Posterior vena cava (tissue), 2 donors: ENCODE measurements at regions of chr15 and their contacts with region 1.

Region 1: DNA sequence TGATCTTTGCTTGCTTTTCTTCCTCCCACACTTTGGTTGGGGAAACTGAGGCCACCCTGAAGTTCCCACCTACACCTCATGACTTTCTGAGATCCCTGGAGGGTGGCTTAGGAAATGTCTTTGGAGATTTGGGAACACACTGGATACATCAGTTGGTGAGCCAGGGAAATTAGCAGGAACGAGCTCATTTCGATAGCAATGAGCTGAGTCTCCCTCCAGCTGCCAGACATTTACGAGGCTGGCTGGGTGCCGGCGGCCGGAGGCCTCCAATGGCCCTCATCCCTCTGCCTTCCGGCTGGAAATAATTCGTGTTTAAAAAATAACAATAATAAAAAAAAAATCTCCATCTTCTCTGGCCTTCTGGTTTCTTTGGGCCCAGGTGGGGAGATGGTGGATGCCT is 38.8 kb downstream of the SMAD6 start:
- DNase-seq: peak; percentile 94

Region 2: DNA sequence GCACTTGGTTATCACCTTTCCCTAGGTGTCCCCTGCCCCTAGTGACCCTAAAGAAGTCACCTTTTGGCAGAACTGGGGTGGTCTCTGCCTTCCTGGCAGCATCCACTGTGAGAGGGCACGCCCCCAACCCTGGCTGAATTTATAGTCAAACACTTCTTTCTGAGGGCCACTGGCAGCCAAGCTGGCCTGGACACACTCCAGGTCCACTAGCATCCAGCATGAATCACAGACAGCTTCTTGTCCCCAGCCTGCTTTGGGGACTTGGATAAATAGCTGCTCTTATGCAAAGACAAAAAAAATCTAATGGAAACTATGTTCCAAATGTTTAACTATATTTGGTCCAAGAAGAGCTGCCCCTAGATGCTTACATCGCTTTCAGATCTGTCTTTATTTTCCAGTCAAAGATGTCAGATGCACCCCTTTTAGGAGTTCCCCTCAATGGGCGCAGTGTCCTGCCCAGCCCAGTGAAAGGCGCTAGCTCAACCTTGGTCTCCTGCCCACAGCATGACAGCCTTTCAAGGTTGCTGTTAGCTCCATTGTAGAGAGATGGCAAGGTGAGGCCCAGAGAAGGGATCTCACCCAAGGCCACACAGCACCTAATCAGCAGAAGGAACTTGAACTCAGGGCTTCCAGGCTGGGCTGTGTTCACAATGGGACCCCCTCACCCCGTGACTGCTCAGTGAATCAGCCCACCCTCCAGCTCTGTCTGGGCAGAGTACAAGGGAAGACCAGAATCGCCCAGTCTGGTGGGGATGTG is 1680.0 kb before region 1 on chr15:
- intact Hi-C with region 1: loop called in 1 of 2 experiments (anchors 5 kb)
- DNase-seq: peak; percentile 87

Region 3: DNA sequence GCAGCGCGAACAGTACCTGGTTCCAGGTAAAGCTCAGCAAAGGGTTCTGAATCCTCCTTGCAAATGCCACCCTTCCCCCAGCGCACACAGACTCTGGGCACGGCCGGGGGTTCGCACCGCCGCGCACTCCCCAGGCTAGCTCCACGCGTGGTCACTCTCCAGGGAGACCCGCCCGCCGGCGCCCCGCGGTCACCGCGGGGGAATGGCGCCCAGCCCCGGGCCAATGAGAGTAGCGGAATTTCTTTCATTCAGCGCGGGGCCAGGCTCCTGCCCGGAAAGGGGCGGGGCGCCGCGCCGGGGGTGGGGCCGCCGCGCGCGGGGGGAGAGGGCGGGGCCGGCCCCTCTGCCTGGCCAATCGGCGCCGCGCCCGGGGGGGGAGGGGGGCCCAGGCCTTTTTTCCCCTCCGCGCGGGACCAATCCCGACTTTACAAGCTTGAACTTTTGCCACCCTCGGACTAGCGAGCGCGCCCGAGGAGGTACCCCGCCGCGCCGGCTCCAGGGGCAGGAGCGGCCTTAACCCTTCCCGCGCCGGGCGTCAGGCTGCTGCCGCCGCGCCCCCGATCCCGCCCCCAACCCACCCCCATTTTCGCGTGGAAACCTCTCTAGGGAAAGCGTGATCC is 39.9 kb before region 1 on chr15:
- intact Hi-C with region 1: no loop called
- DNase-seq: peak; percentile 98

Region 4: DNA sequence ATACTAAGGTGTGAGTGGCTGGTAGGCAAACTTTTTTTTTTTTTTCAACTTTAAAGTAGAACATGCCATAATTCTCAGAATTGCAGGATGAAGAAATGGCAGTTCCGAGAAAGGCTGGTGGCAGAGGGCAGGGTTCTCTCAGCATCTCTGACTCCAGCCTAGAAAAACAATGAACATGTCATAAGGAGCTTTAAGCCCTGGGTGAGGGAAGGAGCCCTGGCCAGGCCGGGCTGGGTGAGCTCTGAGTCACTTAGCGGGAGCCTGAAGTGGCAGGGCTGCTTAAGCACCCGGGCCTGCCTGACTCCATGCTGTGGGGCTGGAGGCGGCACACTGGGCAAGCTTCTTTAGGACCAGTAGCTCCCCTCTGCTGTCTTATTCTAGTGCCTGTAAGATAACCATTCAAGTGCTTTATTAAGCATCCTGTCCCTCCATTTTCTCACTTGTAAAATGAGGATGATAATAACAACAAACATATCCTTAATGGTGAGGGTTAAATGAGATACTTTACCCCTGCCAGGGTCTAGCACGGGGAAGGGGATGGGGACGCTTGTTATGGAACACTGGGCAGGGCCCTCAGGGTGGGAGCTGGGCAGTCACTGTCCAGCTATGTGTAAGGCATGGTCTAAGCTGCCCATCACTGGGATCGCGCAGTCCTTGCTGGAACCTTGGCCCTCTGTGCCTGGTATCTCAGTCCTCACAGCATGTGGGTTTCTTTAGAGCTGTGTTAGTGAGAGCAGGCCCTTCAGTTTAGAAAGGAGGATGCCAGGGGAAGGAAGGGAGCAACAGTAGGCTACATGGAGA is 20.4 kb before region 1 on chr15:
- intact Hi-C with region 1: no loop called
- DNase-seq: peak; percentile 90

Region 5: DNA sequence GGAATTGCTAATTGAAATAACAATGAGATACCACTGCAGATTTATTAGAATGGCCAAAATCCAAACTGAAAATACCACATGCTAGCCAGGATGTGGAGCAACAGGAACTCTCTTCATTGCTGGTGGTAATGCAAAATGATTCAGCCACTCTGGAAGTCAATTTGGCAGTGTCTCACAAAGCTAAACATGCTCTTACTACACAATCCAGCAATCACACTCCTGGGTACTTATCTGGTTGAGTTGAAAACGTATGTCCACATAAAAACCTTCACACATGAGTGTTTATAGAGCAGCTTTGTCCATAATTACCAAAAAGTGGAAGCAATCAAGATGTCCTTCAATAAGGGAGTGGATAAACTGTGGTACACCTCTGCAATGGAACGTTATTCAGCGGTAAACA is 74.5 kb after region 1 on chr15:
- intact Hi-C with region 1: no loop called
- DNase-seq: no peak

Region 6: DNA sequence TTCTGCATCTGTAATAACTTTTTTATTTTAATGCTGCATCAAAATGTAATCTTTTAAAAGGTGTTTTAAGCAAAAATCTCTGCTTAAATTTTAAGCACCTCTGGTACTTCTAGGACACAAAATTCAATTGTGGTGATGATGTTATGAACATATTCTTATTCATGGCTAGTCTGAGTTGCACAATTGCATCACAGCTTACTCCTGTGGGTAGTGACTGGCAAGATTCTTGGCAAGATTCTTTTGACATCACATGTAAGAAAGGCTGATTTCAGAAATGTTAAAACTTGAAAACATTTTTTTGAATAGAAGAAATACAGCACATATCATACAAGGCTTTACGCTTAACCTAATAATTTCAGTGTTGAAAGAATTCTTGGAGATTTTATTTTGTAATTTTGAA is 549.5 kb after region 1 on chr15:
- intact Hi-C with region 1: no loop called
- DNase-seq: no peak